ENCODE measurements at regions of chrX and their contacts with region 1.

Region 1: DNA sequence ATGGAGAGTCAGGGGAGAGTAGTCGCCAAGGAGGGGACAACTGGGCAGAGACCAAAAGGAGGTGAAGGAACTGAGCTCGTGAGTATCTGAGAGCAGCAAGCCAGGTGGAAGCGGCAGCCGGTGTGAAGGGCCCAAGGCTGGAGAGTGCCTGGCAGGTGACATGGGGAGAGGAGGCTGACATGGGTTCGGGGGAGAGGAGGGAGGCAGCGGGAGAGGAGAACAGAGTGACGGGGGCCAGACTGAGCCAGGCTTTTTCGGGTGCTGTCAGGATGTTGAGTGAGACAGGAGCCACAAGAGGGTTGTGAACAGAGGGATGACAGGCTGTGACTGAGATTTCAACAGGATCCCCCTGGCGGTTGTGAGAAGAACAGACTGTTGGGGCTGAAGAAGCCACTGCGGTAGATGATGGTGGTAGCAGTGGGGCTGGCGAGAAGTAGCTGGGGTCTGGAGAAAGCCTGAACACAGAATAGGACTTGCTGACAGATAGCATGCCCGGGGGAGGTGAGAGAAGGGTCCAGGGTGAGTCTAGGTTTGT is 5.7 kb downstream of the ELK1 start:
- DNase-seq: no peak
- ATAC-seq: peak; percentile 90

Region 2: DNA sequence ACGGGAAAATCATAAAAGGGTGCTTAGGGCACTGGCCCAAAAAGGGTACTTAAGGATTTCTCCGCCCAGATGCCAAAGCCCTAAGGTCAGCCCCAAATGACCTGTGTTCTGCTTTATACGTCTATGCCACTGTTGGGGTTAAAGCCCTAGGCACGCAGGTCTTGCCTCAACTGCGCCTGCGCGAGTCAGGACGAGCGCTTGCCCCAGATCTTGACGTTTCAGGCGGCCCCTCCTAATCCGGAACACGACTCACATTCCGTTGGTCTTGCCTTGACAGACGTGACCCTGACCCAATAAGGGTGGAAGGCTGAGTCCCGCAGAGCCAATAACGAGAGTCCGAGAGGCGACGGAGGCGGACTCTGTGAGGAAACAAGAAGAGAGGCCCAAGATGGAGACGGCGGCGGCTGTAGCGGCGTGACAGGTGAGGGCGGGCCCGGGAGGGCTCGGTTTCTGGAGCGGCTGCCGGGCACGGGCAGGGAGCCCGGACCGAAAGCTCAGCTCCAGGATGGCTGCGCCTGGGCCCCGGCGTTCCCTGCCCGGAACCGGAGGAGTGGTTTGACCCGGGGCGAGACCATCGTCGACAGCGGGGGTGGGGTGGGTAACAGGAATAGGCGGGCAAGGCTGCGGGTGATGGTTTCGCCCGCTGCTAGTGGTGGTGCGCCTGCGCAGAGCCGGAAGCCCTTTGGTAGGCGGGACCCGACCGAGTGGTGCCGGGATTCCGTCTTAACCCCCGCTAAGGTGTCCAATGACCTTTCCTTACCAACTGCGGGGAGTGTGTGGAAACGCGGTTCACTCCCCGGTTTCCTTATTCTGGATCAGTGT is 83.6 kb before region 1 on chrX and contains the start of gene ARAF:
- intact Hi-C with region 1: loop called (anchors 5 kb)
- DNase-seq: peak; percentile 96
- ATAC-seq: peak; percentile 93
- total RNA-seq, gene ARAF: 65.7 TPM

Measured in Right ventricle myocardium superior (tissue), 1 donor.